Heart right ventricle (tissue), 16 donors: ENCODE measurements at regions of chrX and their contacts with region 1.

Region 1: DNA sequence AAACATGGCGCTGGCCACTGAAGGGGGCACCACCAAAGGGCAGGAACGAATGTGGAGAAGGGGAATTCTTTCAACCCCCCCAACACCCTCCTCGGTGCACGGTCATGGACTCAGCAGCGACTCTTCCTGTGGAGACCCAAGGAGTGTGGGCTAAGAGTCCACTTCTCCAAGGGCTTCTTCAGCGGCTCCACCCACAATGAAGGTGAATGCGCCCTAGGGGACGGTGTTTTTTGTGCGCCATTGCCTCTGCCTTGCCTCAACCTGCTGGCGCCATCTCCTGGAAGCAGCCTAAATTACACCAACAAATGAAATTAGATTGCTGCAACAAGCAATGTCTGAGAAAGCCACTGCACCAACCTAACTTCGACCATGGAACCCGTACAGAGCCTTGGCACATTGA is 169.2 kb upstream of the MAGEB18 start:
- DNase-seq: peak in 1 of 2 donors; percentile 7
- ATAC-seq: no peak
- H3K4me3 ChIP-seq: no peak overlapping the region
- H3K27ac ChIP-seq: no peak overlapping the region
- H3K4me1 ChIP-seq: no peaks in the 10 kb centered on the region
- H3K27me3 ChIP-seq: no peaks in the 10 kb centered on the region
- CTCF ChIP-seq: peak in 8 of 9 donors; percentile 16 to 46 (median 40)

Region 2: GRCh38 chrX:25523574-25524540 is 445.1 kb before region 1 on chrX:
- intact Hi-C with region 1: loop called in 1 of 10 experiments (anchors 10 kb)
- DNase-seq: peak in 1 of 2 donors; percentile 18
- ATAC-seq: no peak
- H3K4me3 ChIP-seq: no peak overlapping the region
- H3K27ac ChIP-seq: no peak overlapping the region
- H3K4me1 ChIP-seq: no peaks in the 10 kb centered on the region
- H3K27me3 ChIP-seq: no peaks in the 10 kb centered on the region
- CTCF ChIP-seq: peak in 7 of 9 donors; percentile 25 to 48 (median 35)

Region 3: DNA sequence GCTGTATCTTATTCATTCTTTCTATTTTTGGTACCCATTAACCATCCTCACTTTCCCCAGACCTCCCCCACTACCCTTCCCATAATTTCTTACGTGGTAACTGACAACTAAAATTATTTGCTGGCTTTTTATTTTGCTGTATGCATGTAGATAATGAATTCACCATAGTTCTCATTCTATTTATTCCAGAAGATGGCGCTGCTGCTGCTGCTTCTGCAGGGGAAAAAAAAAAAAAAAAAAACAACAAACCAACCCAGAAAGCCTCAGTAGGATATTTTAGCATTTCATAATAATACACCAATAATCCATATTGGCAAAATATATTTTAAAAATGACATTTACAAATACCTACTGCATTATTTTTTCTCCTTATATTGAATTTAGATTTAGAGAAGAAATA is 247.4 kb before region 1 on chrX:
- intact Hi-C with region 1: loop called in 3 of 10 experiments (anchors 5 to 10 kb)
- DNase-seq: no peak
- ATAC-seq: no peak
- H3K4me3 ChIP-seq: no peak overlapping the region
- H3K27ac ChIP-seq: no peak overlapping the region
- H3K4me1 ChIP-seq: no peaks in the 10 kb centered on the region
- H3K27me3 ChIP-seq: no peaks in the 10 kb centered on the region
- CTCF ChIP-seq: peak in 7 of 9 donors; percentile 28 to 58 (median 42)